Keratinocyte (primary cell): ENCODE measurements at regions of chr15 and their contacts with region 1.

Region 1: GRCh38 chr15:43285609-43286037 is 18.9 kb upstream of the TGM5 start:
- DNase-seq: peak; percentile 21
- H3K4me3 ChIP-seq: no peak overlapping the region
- H3K27ac ChIP-seq: no peak overlapping the region
- H3K4me1 ChIP-seq: no peaks in the 10 kb centered on the region
- H3K27me3 ChIP-seq: peaks cover 14% of the 10 kb centered on the region
- CTCF ChIP-seq: peak; percentile 53 to 84 (median 66)

Region 2: GRCh38 chr15:42994546-42994945 is 291.1 kb before region 1 on chr15:
- dilution Hi-C with region 1: no loop called
- DNase-seq: no peak
- H3K4me3 ChIP-seq: no peak overlapping the region
- H3K27ac ChIP-seq: no peak overlapping the region
- H3K4me1 ChIP-seq: peaks cover 5% of the 10 kb centered on the region
- H3K27me3 ChIP-seq: no peaks in the 10 kb centered on the region
- CTCF ChIP-seq: no peak

Region 3: DNA sequence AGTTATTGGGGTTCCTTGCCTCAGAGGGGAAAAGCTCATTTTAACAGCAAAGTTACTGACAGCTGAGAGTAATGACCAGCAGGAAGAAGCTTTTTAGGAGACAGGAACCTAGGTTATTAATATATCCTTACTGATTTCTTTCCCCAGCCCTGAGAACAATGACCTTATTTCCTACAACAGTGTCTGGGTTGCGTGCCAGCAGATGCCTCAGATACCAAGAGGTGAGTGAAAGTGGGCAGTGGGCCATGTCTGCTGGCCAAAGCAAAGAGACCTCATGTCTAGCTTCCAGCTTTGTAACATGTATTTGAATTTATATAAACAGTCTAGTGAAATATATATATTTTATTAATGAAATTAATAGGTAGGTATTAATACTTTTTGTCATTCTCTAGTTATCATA is 95.4 kb before region 1 on chr15:
- dilution Hi-C with region 1: loop called (anchors 10 kb)
- DNase-seq: no peak
- H3K4me3 ChIP-seq: no peak overlapping the region
- H3K27ac ChIP-seq: no peak overlapping the region
- H3K4me1 ChIP-seq: peaks cover 9% of the 10 kb centered on the region
- H3K27me3 ChIP-seq: no peaks in the 10 kb centered on the region
- CTCF ChIP-seq: no peak

Region 4: DNA sequence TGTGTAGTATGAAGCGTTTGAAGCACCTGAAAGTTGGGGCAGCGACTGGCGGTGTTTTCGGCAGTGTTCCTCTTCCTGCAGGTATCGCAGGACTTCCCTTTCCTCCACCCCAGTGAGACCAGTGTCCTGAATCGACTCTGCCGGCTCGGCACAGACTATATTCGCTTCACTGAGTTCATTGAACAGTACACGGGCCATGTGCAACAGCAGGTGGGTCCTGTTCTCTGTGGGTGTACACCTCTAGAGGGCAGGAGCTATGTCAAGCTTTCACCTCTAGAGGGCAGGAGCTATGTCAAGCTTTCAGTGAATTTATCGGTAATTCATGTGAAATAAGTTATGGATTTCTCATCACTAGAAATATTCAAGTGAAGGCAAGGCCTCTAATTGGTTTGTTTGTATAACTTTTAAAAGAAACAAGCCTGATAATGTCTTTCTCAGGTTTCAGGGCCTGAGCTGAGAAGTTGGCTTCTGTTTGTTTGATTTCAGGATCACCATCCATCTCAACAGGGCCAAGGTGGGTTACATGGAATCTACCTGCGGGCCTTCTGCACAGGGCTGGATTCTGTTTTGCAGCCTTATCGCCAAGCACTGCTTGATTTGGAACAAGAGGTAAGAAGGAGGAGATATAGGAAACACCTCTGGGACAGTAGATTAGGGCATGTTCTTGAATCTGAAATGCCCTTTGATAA is 90.5 kb after region 1 on chr15:
- dilution Hi-C with region 1: no loop called
- DNase-seq: no peak
- H3K4me3 ChIP-seq: no peak overlapping the region
- H3K27ac ChIP-seq: no peak overlapping the region
- H3K4me1 ChIP-seq: peaks cover 10% of the 10 kb centered on the region
- H3K27me3 ChIP-seq: no peaks in the 10 kb centered on the region
- CTCF ChIP-seq: peak; percentile 66 to 88 (median 79)

Region 5: GRCh38 chr15:43410572-43411214 is 125.1 kb after region 1 on chr15:
- dilution Hi-C with region 1: no loop called
- DNase-seq: no peak
- H3K4me3 ChIP-seq: no peak overlapping the region
- H3K27ac ChIP-seq: no peak overlapping the region
- H3K4me1 ChIP-seq: no peaks in the 10 kb centered on the region
- H3K27me3 ChIP-seq: no peaks in the 10 kb centered on the region
- CTCF ChIP-seq: no peak